ENCODE measurements at regions of chr1 and their contacts with region 1.

Region 1: DNA sequence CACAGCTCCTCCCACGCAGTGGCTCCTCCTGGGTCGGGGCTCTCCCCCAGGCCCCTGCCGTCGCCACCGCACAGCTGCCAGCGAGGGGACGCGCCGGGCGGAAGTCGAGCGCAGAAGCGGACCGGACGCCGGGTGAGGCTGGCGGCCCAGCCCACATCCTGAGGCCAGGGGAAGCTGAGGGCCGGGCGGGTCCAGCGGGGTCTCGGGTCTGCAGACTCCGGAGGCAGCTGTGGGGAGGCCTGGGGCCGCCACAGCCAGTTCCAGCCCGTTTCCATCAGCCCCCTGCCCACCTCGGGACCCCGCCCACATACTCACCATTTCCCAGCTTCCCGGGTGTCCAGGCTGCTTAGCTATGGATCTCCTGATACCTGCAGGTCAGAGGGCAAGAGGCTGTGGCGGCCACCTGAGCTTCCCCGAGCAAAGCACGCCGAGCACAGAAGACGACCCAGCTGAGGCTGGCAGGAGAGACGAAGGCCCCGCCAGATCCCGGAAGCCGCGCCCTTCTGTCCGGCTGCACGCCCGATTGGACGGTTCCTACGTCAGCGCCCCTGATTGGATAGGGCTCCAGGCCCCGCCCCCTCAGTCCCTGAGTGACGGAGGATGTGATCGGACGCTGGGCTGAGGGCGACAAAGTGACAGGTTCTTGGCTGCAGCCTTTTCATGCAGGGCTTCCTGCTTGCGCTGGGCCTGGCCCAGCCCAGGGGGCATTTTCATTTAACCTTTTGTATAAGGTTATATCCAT is 38.7 kb upstream of the ZNF124 start:
- DNase-seq: peak; percentile 91
- ATAC-seq: peak; percentile 98
- H3K4me3 Mint-ChIP-seq: peak overlapping the region; percentile 95
- H3K27ac Mint-ChIP-seq: peak overlapping the region; percentile 94
- H3K4me1 Mint-ChIP-seq: peaks cover 63% of the 10 kb centered on the region
- H3K27me3 Mint-ChIP-seq: no peaks in the 10 kb centered on the region
- CTCF ChIP-seq: no peak

Region 2: DNA sequence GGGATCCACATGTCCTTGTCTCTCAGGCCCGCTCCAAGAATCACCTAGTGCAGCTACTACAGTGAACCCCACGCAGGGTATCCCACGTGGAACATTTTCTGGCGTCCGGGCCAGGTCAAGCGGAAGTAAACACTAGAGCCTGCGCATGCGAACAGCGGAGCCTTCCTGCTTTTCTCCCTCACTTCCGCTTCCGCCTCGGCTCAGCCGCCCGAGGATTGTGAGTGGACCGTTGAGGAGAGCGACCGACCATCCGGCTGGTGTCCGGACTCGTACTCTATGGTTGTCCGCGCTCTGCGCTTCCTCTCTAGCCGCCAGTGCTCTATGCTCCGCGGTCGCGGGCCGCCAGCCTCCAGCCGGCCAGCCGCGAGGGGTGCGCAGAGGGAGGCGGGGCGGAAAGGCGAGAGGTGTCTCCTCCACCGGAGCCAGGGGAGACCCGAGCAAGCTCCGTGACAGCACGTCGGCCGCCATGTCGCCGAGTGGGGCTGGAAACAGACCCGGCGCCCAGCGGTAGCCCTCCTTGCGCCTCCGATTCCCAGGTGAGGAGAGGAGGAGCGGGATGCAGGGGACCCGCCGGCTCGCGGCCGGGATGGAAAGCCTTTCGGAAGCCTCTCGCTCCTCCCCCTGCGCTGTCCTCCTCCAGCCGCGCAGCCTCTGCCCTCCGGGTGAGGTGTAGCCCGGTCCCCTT is 644.3 kb before region 1 on chr1 and contains the starts of genes CNST and TFB2M:
- CTCF ChIA-PET with region 1: no interaction called
- POLR2A ChIA-PET with region 1: no interaction called
- intact Hi-C with region 1: loop called (anchors 5 kb)
- DNase-seq: peak; percentile 95
- ATAC-seq: peak; percentile 89
- H3K4me3 Mint-ChIP-seq: peak within 1 kb of the TSS; percentile 99
- H3K27ac Mint-ChIP-seq: peak within 1 kb of the TSS; percentile 97
- H3K4me1 Mint-ChIP-seq: peaks cover 60% of the 10 kb centered on the region
- H3K27me3 Mint-ChIP-seq: no peaks in the 10 kb centered on the region
- CTCF ChIP-seq: no peak
- total RNA-seq, gene CNST: 30.2 and 35.2 TPM in 2 replicates
- total RNA-seq, gene TFB2M: 15.9 and 18.3 TPM in 2 replicates

Region 3: DNA sequence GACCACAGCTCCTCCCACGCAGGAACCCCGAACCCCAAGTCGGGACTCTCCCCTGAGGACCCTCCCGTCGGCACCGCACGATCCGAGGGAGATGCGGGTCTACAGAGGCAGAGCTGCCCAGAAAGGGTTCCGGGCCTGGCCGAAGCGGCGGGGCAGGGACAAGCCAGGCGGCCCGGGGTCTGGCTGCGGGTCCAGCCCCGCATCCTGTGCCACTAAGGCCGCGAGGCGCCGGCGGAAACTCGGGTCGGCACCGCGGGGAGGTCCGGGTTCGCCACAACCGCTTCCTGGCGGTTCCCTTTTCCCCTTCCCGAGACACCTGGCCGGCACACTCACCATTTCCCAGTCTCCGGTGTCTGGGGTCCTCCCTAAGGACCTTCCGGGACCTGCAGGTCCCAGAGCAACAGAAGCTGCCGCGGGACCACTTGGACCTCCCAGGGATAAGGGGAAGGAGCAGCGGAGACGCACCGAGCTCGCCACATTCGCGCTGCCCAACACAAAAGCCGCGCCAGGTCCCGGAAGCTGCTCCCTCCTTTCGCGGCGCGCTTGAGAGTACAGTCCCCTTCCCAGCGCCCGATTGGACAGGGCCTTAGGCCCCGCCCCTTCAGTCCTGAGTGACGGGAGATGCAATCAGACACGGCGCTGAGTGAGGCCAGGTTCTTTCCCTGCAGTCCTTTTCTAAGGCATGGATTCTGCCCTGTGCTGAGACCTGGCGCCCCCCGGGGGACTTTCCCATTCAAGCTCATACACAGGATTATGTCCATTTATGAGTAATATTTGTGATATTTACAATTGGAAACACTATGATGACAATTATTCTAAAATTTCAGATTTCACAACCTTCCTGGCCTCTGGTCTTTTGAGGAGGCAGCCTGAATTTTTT is 132.0 kb before region 1 on chr1 and contains the start of gene ZNF670:
- CTCF ChIA-PET with region 1: no interaction called
- POLR2A ChIA-PET with region 1: interaction called, 17 read pairs
- intact Hi-C with region 1: loop called (anchors 5 kb)
- DNase-seq: peak; percentile 78
- ATAC-seq: peak; percentile 98
- H3K4me3 Mint-ChIP-seq: peak within 1 kb of the TSS; percentile 95
- H3K27ac Mint-ChIP-seq: peak within 1 kb of the TSS; percentile 83
- H3K4me1 Mint-ChIP-seq: peaks cover 27% of the 10 kb centered on the region
- H3K27me3 Mint-ChIP-seq: peaks cover 4% of the 10 kb centered on the region
- CTCF ChIP-seq: no peak
- total RNA-seq, gene ZNF670: 6.1 and 6.2 TPM in 2 replicates

Region 4: GRCh38 chr1:247172996-247173395 is 37.6 kb before region 1 on chr1:
- CTCF ChIA-PET with region 1: no interaction called
- POLR2A ChIA-PET with region 1: interaction called, 3 read pairs
- intact Hi-C with region 1: loop called (anchors 2 kb)
- DNase-seq: no peak
- ATAC-seq: no peak
- H3K4me3 Mint-ChIP-seq: no peak overlapping the region
- H3K27ac Mint-ChIP-seq: no peak overlapping the region
- H3K4me1 Mint-ChIP-seq: peaks cover 14% of the 10 kb centered on the region
- H3K27me3 Mint-ChIP-seq: no peaks in the 10 kb centered on the region
- CTCF ChIP-seq: no peak

Region 5: GRCh38 chr1:247331172-247331991 is 120.8 kb after region 1 on chr1 and contains the start of gene ZNF496:
- CTCF ChIA-PET with region 1: no interaction called
- POLR2A ChIA-PET with region 1: interaction called, 4 read pairs
- intact Hi-C with region 1: loop called (anchors 1 kb)
- DNase-seq: peak; percentile 59
- ATAC-seq: peak; percentile 73
- H3K4me3 Mint-ChIP-seq: peak within 1 kb of the TSS; percentile 89
- H3K27ac Mint-ChIP-seq: peak within 1 kb of the TSS; percentile 59
- H3K4me1 Mint-ChIP-seq: peaks cover 23% of the 10 kb centered on the region
- H3K27me3 Mint-ChIP-seq: no peaks in the 10 kb centered on the region
- CTCF ChIP-seq: no peak
- total RNA-seq, gene ZNF496: 15.0 and 21.2 TPM in 2 replicates

Measured in activated B cell treated with CpG ODN at 0.5 μM for 24 hours (primary cell).